ENCODE measurements at regions of chr3 and their contacts with region 1.

Region 1: GRCh38 chr3:50724831-50725230 is 50.1 kb downstream of the DOCK3 start:
- DNase-seq: no peak
- H3K4me3 ChIP-seq: no peak overlapping the region
- H3K27ac ChIP-seq: no peak overlapping the region
- H3K4me1 ChIP-seq: no peaks in the 10 kb centered on the region
- H3K27me3 ChIP-seq: no peaks in the 10 kb centered on the region
- CTCF ChIP-seq: no peak
- EP300 ChIP-seq: no peak
- POLR2A ChIP-seq: no peak

Region 2: DNA sequence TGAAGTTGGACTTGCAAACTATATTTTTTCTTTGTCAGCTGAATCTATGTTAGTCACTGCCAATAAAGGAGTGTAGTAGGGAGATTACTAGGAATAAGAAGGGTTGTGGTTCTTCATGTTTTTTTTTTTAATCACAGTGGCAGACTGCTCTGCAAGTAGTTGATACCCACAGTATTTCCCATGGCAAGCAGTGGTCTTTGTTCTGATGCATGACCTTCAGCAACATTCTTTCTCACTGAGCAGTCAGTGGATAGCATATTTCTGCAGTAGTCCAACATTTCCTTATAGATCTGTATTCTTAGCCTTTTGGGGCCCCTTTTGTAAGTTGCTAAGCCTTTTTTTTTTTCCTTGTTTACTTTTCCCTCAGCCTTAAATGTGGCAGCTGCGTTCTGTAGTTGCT is 101.0 kb after region 1 on chr3:
- intact Hi-C with region 1: loop called in 1 of 4 experiments (anchors 5 kb)
- DNase-seq: no peak
- H3K4me3 ChIP-seq: no peak overlapping the region
- H3K27ac ChIP-seq: no peak overlapping the region
- H3K4me1 ChIP-seq: no peaks in the 10 kb centered on the region
- H3K27me3 ChIP-seq: no peaks in the 10 kb centered on the region
- CTCF ChIP-seq: no peak
- EP300 ChIP-seq: no peak
- POLR2A ChIP-seq: no peak